HCT116 (cell line): ENCODE measurements at regions of chrX and their contacts with region 1.

Region 1: GRCh38 chrX:69222103-69223090 is 57.1 kb upstream of the PJA1 start:
- DNase-seq: peak; percentile 45
- ATAC-seq: peak; percentile 94
- H3K4me3 ChIP-seq: no peak overlapping the region
- H3K27ac ChIP-seq: no peak overlapping the region
- H3K4me1 ChIP-seq: no peaks in the 10 kb centered on the region; a peak in 1 of 4 replicates
- H3K27me3 ChIP-seq: no peaks in the 10 kb centered on the region
- CTCF ChIP-seq: peak; percentile 68 to 80 (median 71); a peak in 5 of 6 replicates
- POLR2A ChIP-seq: no peak
- RAD21 ChIP-seq: peak; percentile 89

Region 2: GRCh38 chrX:68550193-68550592 is 672.2 kb before region 1 on chrX:
- CTCF ChIA-PET with region 1: no interaction called
- POLR2A ChIA-PET with region 1: no interaction called
- RAD21 ChIA-PET with region 1: no interaction called
- intact Hi-C with region 1: no loop called
- DNase-seq: no peak
- ATAC-seq: no peak
- H3K4me3 ChIP-seq: no peak overlapping the region
- H3K27ac ChIP-seq: no peak overlapping the region
- H3K4me1 ChIP-seq: no peaks in the 10 kb centered on the region
- H3K27me3 ChIP-seq: no peaks in the 10 kb centered on the region
- CTCF ChIP-seq: no peak
- POLR2A ChIP-seq: no peak
- RAD21 ChIP-seq: no peak

Region 3: GRCh38 chrX:68732906-68733493 is 489.4 kb before region 1 on chrX:
- CTCF ChIA-PET with region 1: interaction called, 4 read pairs
- POLR2A ChIA-PET with region 1: no interaction called
- RAD21 ChIA-PET with region 1: no interaction called
- intact Hi-C with region 1: loop called (anchors 2 kb)
- DNase-seq: peak; percentile 35
- ATAC-seq: peak; percentile 96
- H3K4me3 ChIP-seq: no peak overlapping the region
- H3K27ac ChIP-seq: no peak overlapping the region
- H3K4me1 ChIP-seq: no peaks in the 10 kb centered on the region
- H3K27me3 ChIP-seq: no peaks in the 10 kb centered on the region
- CTCF ChIP-seq: peak; percentile 64 to 80 (median 73)
- POLR2A ChIP-seq: no peak
- RAD21 ChIP-seq: peak; percentile 82

Region 4: GRCh38 chrX:68822641-68823410 is 399.6 kb before region 1 on chrX:
- CTCF ChIA-PET with region 1: interaction called, 56 read pairs
- POLR2A ChIA-PET with region 1: interaction called, 53 read pairs
- RAD21 ChIA-PET with region 1: interaction called, 9 to 14 read pairs
- intact Hi-C with region 1: loop called (anchors 1 kb)
- DNase-seq: peak; percentile 23
- ATAC-seq: peak; percentile 92
- H3K4me3 ChIP-seq: no peak overlapping the region
- H3K27ac ChIP-seq: no peak overlapping the region
- H3K4me1 ChIP-seq: peaks cover 0 to 9% of the 10 kb centered on the region in 2 experiments; a peak in 1 of 4 replicates
- H3K27me3 ChIP-seq: no peaks in the 10 kb centered on the region
- CTCF ChIP-seq: peak in 2 of 3 experiments; percentile 44 to 56; a peak in 4 of 6 replicates
- POLR2A ChIP-seq: no peak
- RAD21 ChIP-seq: no peak

Region 5: DNA sequence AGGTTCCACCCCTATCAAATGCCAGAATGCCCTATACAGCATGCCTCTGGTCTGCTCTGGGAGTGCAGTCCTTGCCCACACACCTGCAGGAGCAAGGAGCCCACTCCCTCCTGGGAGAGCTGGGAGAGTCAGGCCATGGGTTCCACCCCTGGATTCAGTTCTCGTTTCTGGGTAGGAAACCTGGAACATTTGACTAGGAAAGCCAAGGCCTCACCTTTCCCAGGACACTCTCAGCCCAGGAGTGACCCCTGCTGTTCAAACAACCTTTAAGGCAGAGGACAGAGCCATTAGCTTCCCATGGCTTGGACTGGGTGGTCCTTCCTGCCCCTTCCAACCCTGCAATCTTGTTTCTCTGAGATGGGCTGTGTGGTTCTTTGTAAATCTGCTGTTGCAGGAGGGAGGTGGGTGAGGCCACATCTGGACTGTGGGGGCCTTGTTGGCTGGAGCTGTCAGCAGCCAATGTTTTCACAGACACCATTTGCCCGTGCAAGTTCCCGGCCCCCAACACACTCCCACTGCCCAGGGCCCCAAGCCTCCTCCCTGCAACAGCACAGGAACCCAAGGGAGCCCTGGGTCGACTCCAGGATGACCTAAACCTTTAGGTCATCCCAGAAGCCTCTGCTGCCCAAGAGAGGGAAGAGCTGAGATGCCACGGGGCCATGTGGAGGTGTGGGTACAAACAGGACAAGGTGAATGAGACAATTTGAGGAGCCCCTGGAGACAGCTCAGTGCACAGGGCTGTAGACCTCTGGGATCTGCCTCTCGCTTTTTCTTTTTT is 161.6 kb before region 1 on chrX:
- CTCF ChIA-PET with region 1: no interaction called
- POLR2A ChIA-PET with region 1: no interaction called
- RAD21 ChIA-PET with region 1: no interaction called
- intact Hi-C with region 1: no loop called
- DNase-seq: peak; percentile 3
- ATAC-seq: peak; percentile 82
- H3K4me3 ChIP-seq: no peak overlapping the region
- H3K27ac ChIP-seq: no peak overlapping the region
- H3K4me1 ChIP-seq: no peaks in the 10 kb centered on the region
- H3K27me3 ChIP-seq: no peaks in the 10 kb centered on the region
- CTCF ChIP-seq: peak; percentile 11 to 38 (median 29); a peak in 3 of 6 replicates
- POLR2A ChIP-seq: no peak
- RAD21 ChIP-seq: peak; percentile 72

Region 6: GRCh38 chrX:69133921-69134542 is 88.4 kb before region 1 on chrX:
- CTCF ChIA-PET with region 1: interaction called, 6 read pairs
- POLR2A ChIA-PET with region 1: no interaction called
- RAD21 ChIA-PET with region 1: no interaction called
- intact Hi-C with region 1: loop called (anchors 5 kb)
- DNase-seq: peak; percentile 72
- ATAC-seq: peak; percentile 99
- H3K4me3 ChIP-seq: no peak overlapping the region
- H3K27ac ChIP-seq: no peak overlapping the region
- H3K4me1 ChIP-seq: 0 out of 4 replicates have a peak, but pooled peaks cover 0 to 4% of the 10 kb centered on the region in 2 experiments
- H3K27me3 ChIP-seq: no peaks in the 10 kb centered on the region
- CTCF ChIP-seq: peak; percentile 67 to 90 (median 73)
- POLR2A ChIP-seq: no peak
- RAD21 ChIP-seq: peak; percentile 69

Region 7: DNA sequence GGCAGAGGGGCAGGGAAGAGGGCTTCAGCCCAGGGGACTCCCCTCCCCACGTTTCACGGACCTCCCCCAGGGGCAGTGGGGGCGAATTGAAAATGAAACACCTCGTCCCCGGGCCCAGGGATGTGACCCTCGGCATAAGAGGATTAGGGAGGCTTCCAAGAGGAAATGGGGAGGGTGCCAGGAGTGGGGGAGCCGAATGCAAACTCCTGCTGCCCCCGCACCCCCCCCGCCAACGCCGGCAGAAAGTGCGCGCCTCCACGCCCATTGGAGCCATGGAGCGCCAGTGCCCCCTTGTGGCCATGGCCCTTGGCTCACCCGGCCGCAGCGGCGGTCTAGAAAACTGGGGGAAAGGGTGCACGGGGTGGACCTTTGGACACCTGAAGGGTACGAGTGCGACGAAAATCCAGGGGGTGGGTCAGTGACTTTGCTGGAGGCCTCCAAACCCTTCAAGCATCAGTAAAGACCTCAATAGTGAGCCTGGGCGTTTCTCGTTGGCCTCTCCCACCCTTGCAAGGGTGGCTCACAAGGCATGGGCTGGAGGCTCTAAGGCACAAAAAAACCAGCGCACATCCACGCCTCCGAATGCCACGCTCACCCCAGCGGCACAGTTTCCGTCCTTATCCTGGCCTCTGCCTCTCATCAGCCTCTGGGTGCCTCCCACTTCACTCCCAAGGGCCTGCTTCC is 63.6 kb after region 1 on chrX:
- CTCF ChIA-PET with region 1: no interaction called
- POLR2A ChIA-PET with region 1: no interaction called
- RAD21 ChIA-PET with region 1: no interaction called
- intact Hi-C with region 1: loop called (anchors 2 kb)
- DNase-seq: peak; percentile 0
- ATAC-seq: peak; percentile 92
- H3K4me3 ChIP-seq: peak overlapping the region; percentile 13 to 16; a peak in 3 of 4 replicates
- H3K27ac ChIP-seq: no peak overlapping the region
- H3K4me1 ChIP-seq: no peaks in the 10 kb centered on the region; a peak in 1 of 4 replicates
- H3K27me3 ChIP-seq: no peaks in the 10 kb centered on the region
- CTCF ChIP-seq: peak; percentile 59 to 79 (median 74); a peak in 5 of 6 replicates
- POLR2A ChIP-seq: no peak
- RAD21 ChIP-seq: peak; percentile 85

Region 8: GRCh38 chrX:69324851-69325250 is 102.5 kb after region 1 on chrX:
- CTCF ChIA-PET with region 1: no interaction called
- POLR2A ChIA-PET with region 1: no interaction called
- RAD21 ChIA-PET with region 1: no interaction called
- intact Hi-C with region 1: no loop called
- DNase-seq: no peak
- ATAC-seq: no peak
- H3K4me3 ChIP-seq: no peak overlapping the region
- H3K27ac ChIP-seq: no peak overlapping the region
- H3K4me1 ChIP-seq: no peaks in the 10 kb centered on the region
- H3K27me3 ChIP-seq: no peaks in the 10 kb centered on the region
- CTCF ChIP-seq: no peak
- POLR2A ChIP-seq: no peak
- RAD21 ChIP-seq: no peak

Region 9: DNA sequence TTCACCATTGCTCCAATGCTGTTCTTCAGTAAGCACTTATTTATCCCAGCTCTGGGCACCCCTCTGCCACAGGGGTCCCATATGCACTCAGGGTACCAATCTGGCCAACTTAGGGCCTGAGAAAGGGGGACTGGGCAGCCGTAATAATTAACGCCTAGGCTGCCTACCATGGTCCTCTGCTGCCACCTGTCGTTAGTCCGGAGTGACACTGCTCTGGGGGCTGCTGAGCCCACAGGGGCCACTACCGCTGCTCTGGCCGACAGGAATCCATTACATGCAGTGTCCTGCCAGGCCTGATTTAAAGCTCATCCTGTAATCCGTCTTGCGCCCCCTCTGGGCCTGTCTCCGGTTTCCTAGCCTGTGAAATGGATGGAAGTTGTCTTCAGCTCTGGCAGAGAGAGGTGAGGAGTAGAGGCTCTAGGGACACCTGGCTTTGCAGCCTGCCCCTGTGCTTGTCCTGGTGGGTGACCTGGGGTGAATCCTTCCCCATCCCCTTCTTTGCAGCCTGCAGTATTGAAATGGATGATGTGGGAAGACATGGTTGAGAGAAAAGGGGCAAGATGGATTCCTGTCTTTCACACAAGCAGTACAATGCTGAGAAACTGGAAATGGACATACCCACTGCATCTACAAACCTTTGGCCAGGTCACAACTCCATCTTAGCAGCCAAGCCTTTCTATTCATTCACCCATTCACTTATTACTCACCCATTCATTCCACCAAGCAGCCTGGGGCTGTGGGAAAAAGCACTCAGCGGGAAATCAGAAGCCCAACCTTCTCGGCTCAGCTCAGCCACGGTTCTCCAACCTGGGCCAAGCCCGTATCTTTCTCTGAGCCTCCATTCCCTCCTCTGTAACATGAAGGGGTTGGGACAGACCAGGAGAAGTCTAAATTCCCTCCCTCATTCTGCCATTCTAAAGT is 165.4 kb after region 1 on chrX:
- CTCF ChIA-PET with region 1: interaction called, 4 read pairs
- POLR2A ChIA-PET with region 1: no interaction called
- RAD21 ChIA-PET with region 1: no interaction called
- intact Hi-C with region 1: loop called (anchors 5 kb)
- DNase-seq: peak; percentile 31
- ATAC-seq: peak; percentile 98
- H3K4me3 ChIP-seq: no peak overlapping the region
- H3K27ac ChIP-seq: no peak overlapping the region
- H3K4me1 ChIP-seq: peaks cover 0 to 3% of the 10 kb centered on the region in 2 experiments; a peak in 1 of 4 replicates
- H3K27me3 ChIP-seq: 0 out of 2 replicates have a peak, but pooled peaks cover 4% of the 10 kb centered on the region
- CTCF ChIP-seq: peak; percentile 62 to 76 (median 71)
- POLR2A ChIP-seq: no peak
- RAD21 ChIP-seq: peak; percentile 85